AG04449 (cell line): ENCODE measurements at regions of chr20 and their contacts with region 1.

Region 1: GRCh38 chr20:61242189-61242588 is 9.9 kb upstream of the CDH4 start:
- DNase-seq: no peak
- H3K4me3 ChIP-seq: no peak overlapping the region
- CTCF ChIP-seq: no peak

Region 2: GRCh38 chr20:61014491-61014890 is 227.7 kb before region 1 on chr20:
- CTCF ChIA-PET with region 1: no interaction called
- POLR2A ChIA-PET with region 1: no interaction called
- DNase-seq: no peak
- H3K4me3 ChIP-seq: no peak overlapping the region
- CTCF ChIP-seq: no peak

Region 3: GRCh38 chr20:61253264-61253639 is 11.1 kb after region 1 on chr20:
- CTCF ChIA-PET with region 1: interaction called, 16 read pairs
- POLR2A ChIA-PET with region 1: interaction called, 3 read pairs
- DNase-seq: no peak
- H3K4me3 ChIP-seq: peak overlapping the region; percentile 53
- CTCF ChIP-seq: peak; percentile 59